ENCODE measurements at regions of chr3 and their contacts with region 1.

Region 1: DNA sequence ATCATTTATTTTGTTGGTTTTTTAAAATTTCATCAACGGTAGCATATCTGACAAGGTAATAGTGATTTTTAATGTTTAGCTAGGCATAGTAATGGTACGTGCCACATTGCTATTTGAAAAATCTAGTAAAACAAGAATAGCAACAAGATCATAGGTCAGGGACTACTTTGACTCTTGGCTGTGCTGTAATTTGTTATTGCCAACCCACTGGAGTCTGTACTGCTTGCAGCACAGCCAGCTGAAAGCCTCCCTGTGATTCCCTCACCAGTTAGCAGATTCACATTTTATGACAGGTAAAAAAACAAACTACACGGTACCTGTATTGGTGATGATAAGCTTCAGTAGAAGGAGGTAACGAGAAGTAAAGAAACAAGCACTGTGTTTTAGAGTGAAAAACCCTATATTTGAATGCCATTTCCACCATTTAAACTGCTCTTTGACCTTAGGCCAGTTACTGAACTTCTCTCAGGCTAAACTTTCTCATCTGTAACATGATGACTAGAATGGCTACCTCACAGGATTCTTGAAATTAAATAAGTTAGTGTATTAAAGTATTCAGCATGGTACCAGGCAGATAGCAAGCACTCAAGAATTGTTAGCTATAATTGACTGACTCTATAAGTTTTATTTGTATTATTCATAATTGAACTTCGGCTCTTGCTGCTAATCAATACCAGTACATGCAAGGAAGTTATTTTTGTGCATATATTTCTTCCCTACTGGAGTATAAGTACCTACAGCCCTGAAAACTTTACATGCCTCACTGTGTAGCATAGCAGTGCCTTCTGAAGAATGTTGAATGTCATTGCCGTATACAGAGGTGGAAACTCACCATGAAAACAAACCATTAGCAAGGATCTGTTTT is 16.1 kb downstream of the FILIP1L start:
- DNase-seq: no peak
- H3K4me3 ChIP-seq: no peak overlapping the region
- H3K27ac ChIP-seq: no peak overlapping the region
- H3K4me1 ChIP-seq: peaks cover 13% of the 10 kb centered on the region
- H3K27me3 ChIP-seq: no peaks in the 10 kb centered on the region
- CTCF ChIP-seq: no peak

Region 2: GRCh38 chr3:101685870-101686412 is 1587.8 kb after region 1 on chr3:
- CTCF ChIA-PET with region 1: no interaction called
- POLR2A ChIA-PET with region 1: interaction called, 10 read pairs
- intact Hi-C with region 1: no loop called
- DNase-seq: no peak
- H3K4me3 ChIP-seq: peak overlapping the region; percentile 75
- H3K27ac ChIP-seq: peak overlapping the region; percentile 94
- H3K4me1 ChIP-seq: peaks cover 21% of the 10 kb centered on the region
- H3K27me3 ChIP-seq: no peaks in the 10 kb centered on the region
- CTCF ChIP-seq: no peak